ENCODE measurements at regions of chr10 and their contacts with region 1.

Region 1: DNA sequence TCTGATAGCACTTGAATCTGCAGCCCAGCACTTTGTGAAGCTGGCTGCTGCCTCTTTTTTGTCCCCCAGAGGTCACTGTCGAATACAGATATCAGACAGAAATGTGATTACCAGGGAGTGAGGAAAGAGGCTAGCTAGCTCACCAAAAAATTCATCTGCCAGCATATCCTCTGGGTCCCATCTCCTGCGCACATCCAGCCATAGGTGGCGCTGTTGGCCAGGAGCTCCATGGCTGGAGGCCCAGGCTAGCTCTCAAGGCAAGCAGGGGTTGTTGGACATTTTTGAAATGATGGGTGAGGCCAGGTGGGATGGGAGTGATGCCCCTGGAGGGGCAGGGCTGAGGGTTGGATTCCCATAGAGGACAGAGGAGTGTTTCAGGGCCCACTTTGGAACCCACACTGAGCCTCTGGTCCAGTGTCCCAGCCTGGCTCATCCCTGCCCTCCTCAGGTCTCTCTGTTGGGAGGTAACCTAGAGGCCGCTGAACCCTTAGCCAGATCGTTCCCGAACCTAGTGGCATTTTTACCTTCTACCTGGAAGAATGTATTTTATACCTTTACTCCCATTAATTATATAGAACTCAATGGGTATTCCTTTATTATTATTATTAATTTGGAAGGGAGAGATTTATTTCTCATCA is 14.8 kb downstream of the DPCD start:
- DNase-seq: peak; percentile 89
- ATAC-seq: peak; percentile 96
- H3K4me3 Mint-ChIP-seq: no peak overlapping the region
- H3K27ac Mint-ChIP-seq: no peak overlapping the region
- H3K4me1 Mint-ChIP-seq: no peaks in the 10 kb centered on the region
- H3K27me3 Mint-ChIP-seq: no peaks in the 10 kb centered on the region
- CTCF ChIP-seq: peak; percentile 90

Region 2: GRCh38 chr10:101429423-101429822 is 173.5 kb before region 1 on chr10:
- CTCF ChIA-PET with region 1: no interaction called
- POLR2A ChIA-PET with region 1: no interaction called
- intact Hi-C with region 1: no loop called
- DNase-seq: no peak
- ATAC-seq: no peak
- H3K4me3 Mint-ChIP-seq: no peak overlapping the region
- H3K27ac Mint-ChIP-seq: no peak overlapping the region
- H3K4me1 Mint-ChIP-seq: peaks cover 4% of the 10 kb centered on the region
- H3K27me3 Mint-ChIP-seq: no peaks in the 10 kb centered on the region
- CTCF ChIP-seq: no peak

Region 3: GRCh38 chr10:101587725-101588653 is 14.9 kb before region 1 on chr10 and contains the starts of genes DPCD and POLL:
- CTCF ChIA-PET with region 1: interaction called, 13 read pairs
- POLR2A ChIA-PET with region 1: no interaction called
- intact Hi-C with region 1: no loop called
- DNase-seq: peak; percentile 98
- ATAC-seq: peak; percentile 97
- H3K4me3 Mint-ChIP-seq: peak within 1 kb of the TSS; percentile 93
- H3K27ac Mint-ChIP-seq: peak within 1 kb of the TSS; percentile 77
- H3K4me1 Mint-ChIP-seq: peaks cover 17% of the 10 kb centered on the region
- H3K27me3 Mint-ChIP-seq: no peaks in the 10 kb centered on the region
- CTCF ChIP-seq: no peak
- total RNA-seq, gene DPCD: 19.0 TPM
- total RNA-seq, gene POLL: 32.2 to 33.8 TPM

Region 4: GRCh38 chr10:101774589-101775272 is 171.9 kb after region 1 on chr10:
- CTCF ChIA-PET with region 1: interaction called, 180 read pairs
- POLR2A ChIA-PET with region 1: interaction called, 3 read pairs
- intact Hi-C with region 1: no loop called
- DNase-seq: no peak
- ATAC-seq: no peak
- H3K4me3 Mint-ChIP-seq: no peak overlapping the region
- H3K27ac Mint-ChIP-seq: no peak overlapping the region
- H3K4me1 Mint-ChIP-seq: peaks cover 18% of the 10 kb centered on the region
- H3K27me3 Mint-ChIP-seq: peaks cover 59% of the 10 kb centered on the region
- CTCF ChIP-seq: no peak